ENCODE measurements at regions of chr7 and their contacts with region 1.

Region 1: DNA sequence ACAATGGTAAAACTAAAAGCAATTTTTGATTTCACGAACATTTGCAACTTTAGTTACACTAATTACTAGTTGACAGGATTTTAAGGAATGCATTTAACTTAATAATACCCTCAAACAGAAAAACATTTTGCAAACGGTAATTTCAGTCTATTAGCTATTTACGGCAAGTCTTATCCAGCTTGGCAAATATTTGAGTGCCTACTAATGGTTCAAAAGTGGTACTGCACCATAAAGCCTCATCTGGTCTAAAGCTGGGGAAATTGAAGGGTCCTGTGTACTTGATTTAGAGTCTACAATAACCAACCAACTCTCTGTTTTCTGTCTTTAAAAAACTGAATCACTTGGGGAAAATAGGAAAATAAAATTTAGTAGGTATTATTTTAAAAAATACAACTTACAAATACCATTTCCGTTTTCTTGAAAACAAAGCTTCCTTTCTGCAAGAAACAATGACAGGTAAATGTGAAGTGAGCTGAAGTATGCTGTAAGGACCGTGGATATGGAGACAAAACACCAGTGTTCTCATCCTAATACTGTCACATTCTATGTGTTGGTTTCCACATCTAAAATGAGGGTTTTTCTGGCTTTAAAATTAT is 142.3 kb downstream of the VPS50 start:
- DNase-seq: peak; percentile 59
- ATAC-seq: peak; percentile 78
- H3K4me3 ChIP-seq: no peak overlapping the region
- H3K27ac ChIP-seq: no peak overlapping the region
- H3K4me1 ChIP-seq: no peaks in the 10 kb centered on the region
- H3K27me3 ChIP-seq: 0 out of 2 replicates have a peak, but pooled peaks cover 7% of the 10 kb centered on the region
- CTCF ChIP-seq: peak; percentile 81

Region 2: GRCh38 chr7:92813390-92814024 is 560.9 kb before region 1 on chr7:
- CTCF ChIA-PET with region 1: no interaction called
- POLR2A ChIA-PET with region 1: no interaction called
- intact Hi-C with region 1: no loop called
- DNase-seq: no peak
- ATAC-seq: no peak
- H3K4me3 ChIP-seq: no peak overlapping the region
- H3K27ac ChIP-seq: no peak overlapping the region
- H3K4me1 ChIP-seq: peaks cover 19% of the 10 kb centered on the region
- H3K27me3 ChIP-seq: no peaks in the 10 kb centered on the region
- CTCF ChIP-seq: no peak

Region 3: DNA sequence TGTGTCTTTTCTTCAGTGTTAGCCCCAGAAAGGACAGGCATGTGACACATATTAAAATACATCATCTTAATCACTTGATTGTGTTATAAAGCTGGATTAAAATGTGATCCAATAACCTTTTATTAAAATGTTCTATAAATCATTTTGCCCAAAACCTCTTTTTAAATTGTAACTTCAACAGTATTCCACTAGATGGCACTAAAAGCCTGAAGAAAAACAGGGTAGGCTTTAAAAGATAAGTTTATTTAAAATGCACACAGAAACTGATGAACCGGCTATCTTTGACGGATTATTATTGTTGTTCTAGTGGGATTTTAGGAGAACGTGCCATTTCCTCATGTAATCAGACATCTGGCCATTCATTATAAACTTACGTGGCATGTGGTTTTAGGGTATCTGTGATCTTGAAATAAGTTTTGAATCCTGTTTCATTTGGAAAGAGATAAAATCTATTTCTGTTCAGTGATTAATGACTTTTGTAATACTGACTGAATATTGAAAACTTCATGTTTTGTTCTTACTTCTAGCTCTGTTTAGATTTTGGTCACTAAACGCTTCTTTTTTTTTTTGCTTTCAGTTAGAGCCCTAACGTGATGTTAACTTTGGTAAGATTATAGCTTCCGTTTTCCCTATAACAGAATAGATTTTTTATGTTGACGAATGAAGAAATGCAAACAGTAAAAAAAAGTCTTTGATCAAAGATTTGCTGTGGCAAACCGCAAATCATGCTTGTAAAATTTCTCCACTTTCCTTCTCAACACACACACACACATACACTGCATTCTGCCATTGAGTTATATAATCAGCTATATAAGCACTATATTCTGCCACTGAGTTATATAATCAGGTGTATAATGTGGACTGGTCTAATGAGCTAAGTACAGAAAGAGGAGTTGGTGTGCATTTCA is 128.7 kb before region 1 on chr7:
- CTCF ChIA-PET with region 1: interaction called, 11 read pairs
- POLR2A ChIA-PET with region 1: interaction called, 3 read pairs
- intact Hi-C with region 1: loop called (anchors 1 kb)
- DNase-seq: peak; percentile 57
- ATAC-seq: no peak
- H3K4me3 ChIP-seq: no peak overlapping the region
- H3K27ac ChIP-seq: no peak overlapping the region
- H3K4me1 ChIP-seq: no peaks in the 10 kb centered on the region
- H3K27me3 ChIP-seq: no peaks in the 10 kb centered on the region
- CTCF ChIP-seq: peak; percentile 76

Region 4: DNA sequence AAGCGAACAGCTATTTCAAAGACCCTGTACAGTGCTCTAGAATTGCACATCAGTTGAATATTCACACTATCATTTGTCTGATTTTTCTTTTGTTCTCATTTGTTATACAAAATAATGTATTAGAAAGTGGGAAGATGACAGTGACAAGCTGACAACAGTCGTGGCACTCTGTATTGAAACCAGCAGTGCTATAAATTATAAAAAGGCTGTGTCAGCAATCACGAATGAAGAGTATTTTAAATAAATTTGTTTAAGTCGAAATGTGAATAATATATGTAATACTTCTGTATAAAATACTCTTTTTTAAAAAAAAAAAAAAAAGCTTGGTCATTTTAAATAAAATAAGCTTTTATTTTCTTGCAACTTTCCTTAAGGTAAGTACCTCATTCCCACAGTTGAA is 19.6 kb before region 1 on chr7:
- CTCF ChIA-PET with region 1: no interaction called
- POLR2A ChIA-PET with region 1: no interaction called
- intact Hi-C with region 1: loop called (anchors 2 kb)
- DNase-seq: no peak
- ATAC-seq: no peak
- H3K4me3 ChIP-seq: no peak overlapping the region
- H3K27ac ChIP-seq: no peak overlapping the region
- H3K4me1 ChIP-seq: no peaks in the 10 kb centered on the region
- H3K27me3 ChIP-seq: no peaks in the 10 kb centered on the region
- CTCF ChIP-seq: no peak

Region 5: DNA sequence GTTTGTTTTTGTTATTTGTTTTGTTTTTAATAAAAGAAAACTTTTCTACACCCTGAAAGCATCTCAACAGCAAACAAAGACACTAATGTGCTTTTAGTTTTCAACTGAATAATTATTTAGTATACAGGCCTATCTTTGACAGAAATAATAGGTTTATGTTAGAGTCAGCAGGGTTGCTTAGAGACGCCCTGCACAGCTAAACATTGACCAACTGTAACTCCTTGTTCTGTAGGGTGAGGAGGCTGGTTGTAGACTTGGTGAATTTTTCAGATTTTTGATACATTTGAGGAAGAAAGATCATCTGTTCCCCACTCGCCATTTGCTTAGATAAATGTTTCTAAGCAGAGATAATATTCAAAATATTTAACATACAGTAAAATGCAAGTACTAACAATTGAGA is 97.0 kb after region 1 on chr7:
- CTCF ChIA-PET with region 1: no interaction called
- POLR2A ChIA-PET with region 1: no interaction called
- intact Hi-C with region 1: no loop called
- DNase-seq: no peak
- ATAC-seq: no peak
- H3K4me3 ChIP-seq: no peak overlapping the region
- H3K27ac ChIP-seq: no peak overlapping the region
- H3K4me1 ChIP-seq: no peaks in the 10 kb centered on the region
- H3K27me3 ChIP-seq: peaks cover 50% of the 10 kb centered on the region
- CTCF ChIP-seq: no peak